ENCODE measurements at regions of chr6 and their contacts with region 1.

Region 1: GRCh38 chr6:145633981-145634627 is 101.2 kb downstream of the EPM2A start:
- DNase-seq: peak; percentile 76
- ATAC-seq: peak; percentile 99
- H3K4me3 ChIP-seq: no peak overlapping the region
- H3K27ac ChIP-seq: no peak overlapping the region
- H3K4me1 ChIP-seq: no peaks in the 10 kb centered on the region
- H3K27me3 ChIP-seq: no peaks in the 10 kb centered on the region
- CTCF ChIP-seq: peak; percentile 80
- POLR2A ChIP-seq: no peak
- RAD21 ChIP-seq: peak; percentile 85

Region 2: GRCh38 chr6:144840619-144841018 is 793.5 kb before region 1 on chr6:
- CTCF ChIA-PET with region 1: no interaction called
- POLR2A ChIA-PET with region 1: no interaction called
- dilution Hi-C with region 1: no loop called
- in situ Hi-C with region 1: no loop called
- intact Hi-C with region 1: loop called (anchors 5 kb)
- DNase-seq: no peak
- ATAC-seq: no peak
- H3K4me3 ChIP-seq: no peak overlapping the region
- H3K27ac ChIP-seq: no peak overlapping the region
- H3K4me1 ChIP-seq: peaks cover 2% of the 10 kb centered on the region; the same call in 1 of the 2 replicates
- H3K27me3 ChIP-seq: no peaks in the 10 kb centered on the region
- CTCF ChIP-seq: no peak
- POLR2A ChIP-seq: no peak
- RAD21 ChIP-seq: no peak

Region 3: GRCh38 chr6:144931172-144932035 is 702.7 kb before region 1 on chr6:
- CTCF ChIA-PET with region 1: interaction called, 3 read pairs
- POLR2A ChIA-PET with region 1: no interaction called
- dilution Hi-C with region 1: no loop called
- in situ Hi-C with region 1: no loop called
- intact Hi-C with region 1: loop called (anchors 10 kb)
- DNase-seq: peak; percentile 36
- ATAC-seq: peak; percentile 76
- H3K4me3 ChIP-seq: no peak overlapping the region
- H3K27ac ChIP-seq: no peak overlapping the region
- H3K4me1 ChIP-seq: no peaks in the 10 kb centered on the region
- H3K27me3 ChIP-seq: no peaks in the 10 kb centered on the region
- CTCF ChIP-seq: peak; percentile 66
- POLR2A ChIP-seq: no peak
- RAD21 ChIP-seq: peak; percentile 70

Region 4: DNA sequence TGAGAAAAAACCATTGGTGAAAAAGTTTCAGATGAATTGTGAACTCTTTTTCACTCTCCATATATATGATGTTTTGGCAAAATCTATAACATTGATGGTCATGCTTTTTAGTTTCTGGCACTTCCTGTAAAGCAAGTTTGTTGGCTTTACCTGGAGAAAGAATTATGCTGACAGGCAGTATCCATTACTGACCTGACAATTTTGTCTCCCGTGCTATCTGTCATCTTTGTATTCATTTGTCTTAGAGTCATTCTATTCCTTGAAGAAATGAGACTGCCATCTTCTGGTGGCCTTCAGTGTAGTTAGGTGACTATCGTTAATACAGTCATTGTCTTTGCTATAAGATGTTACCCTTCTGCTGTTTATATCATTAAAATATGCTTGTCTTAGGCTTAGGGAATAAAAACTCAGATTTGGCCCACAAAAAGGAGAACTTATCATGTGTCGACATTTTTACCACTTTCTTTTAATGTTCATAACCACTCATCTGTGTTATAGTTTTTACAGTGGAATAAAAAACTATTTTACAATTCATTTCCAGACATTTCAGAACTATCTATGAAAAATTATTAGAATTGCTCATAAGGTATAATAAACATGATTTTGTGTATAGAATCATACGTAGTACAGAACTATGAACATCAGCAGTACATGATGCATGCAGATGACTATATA is 605.8 kb before region 1 on chr6:
- CTCF ChIA-PET with region 1: interaction called, 3 read pairs
- POLR2A ChIA-PET with region 1: no interaction called
- dilution Hi-C with region 1: no loop called
- in situ Hi-C with region 1: no loop called
- intact Hi-C with region 1: loop called (anchors 5 kb)
- DNase-seq: peak; percentile 33
- ATAC-seq: peak; percentile 80; the same call in 1 of the 2 replicates
- H3K4me3 ChIP-seq: no peak overlapping the region
- H3K27ac ChIP-seq: no peak overlapping the region
- H3K4me1 ChIP-seq: no peaks in the 10 kb centered on the region
- H3K27me3 ChIP-seq: no peaks in the 10 kb centered on the region
- CTCF ChIP-seq: peak; percentile 52
- POLR2A ChIP-seq: no peak
- RAD21 ChIP-seq: peak; percentile 54

Region 5: GRCh38 chr6:145137426-145137825 is 496.7 kb before region 1 on chr6:
- CTCF ChIA-PET with region 1: no interaction called
- POLR2A ChIA-PET with region 1: no interaction called
- dilution Hi-C with region 1: no loop called
- in situ Hi-C with region 1: no loop called
- intact Hi-C with region 1: loop called (anchors 5 kb)
- DNase-seq: peak; percentile 38
- ATAC-seq: peak; percentile 35; the same call in 1 of the 2 replicates
- H3K4me3 ChIP-seq: no peak overlapping the region
- H3K27ac ChIP-seq: no peak overlapping the region
- H3K4me1 ChIP-seq: 0 out of 2 replicates have a peak, but pooled peaks cover 1% of the 10 kb centered on the region
- H3K27me3 ChIP-seq: no peaks in the 10 kb centered on the region
- CTCF ChIP-seq: peak; percentile 43
- POLR2A ChIP-seq: no peak
- RAD21 ChIP-seq: peak; percentile 53

Region 6: GRCh38 chr6:145491127-145491526 is 143.0 kb before region 1 on chr6:
- CTCF ChIA-PET with region 1: no interaction called
- POLR2A ChIA-PET with region 1: no interaction called
- dilution Hi-C with region 1: no loop called
- in situ Hi-C with region 1: no loop called
- intact Hi-C with region 1: no loop called
- DNase-seq: no peak
- ATAC-seq: no peak
- H3K4me3 ChIP-seq: no peak overlapping the region
- H3K27ac ChIP-seq: no peak overlapping the region
- H3K4me1 ChIP-seq: no peaks in the 10 kb centered on the region
- H3K27me3 ChIP-seq: no peaks in the 10 kb centered on the region; the same call in 1 of the 2 replicates
- CTCF ChIP-seq: no peak
- POLR2A ChIP-seq: no peak
- RAD21 ChIP-seq: no peak

Region 7: DNA sequence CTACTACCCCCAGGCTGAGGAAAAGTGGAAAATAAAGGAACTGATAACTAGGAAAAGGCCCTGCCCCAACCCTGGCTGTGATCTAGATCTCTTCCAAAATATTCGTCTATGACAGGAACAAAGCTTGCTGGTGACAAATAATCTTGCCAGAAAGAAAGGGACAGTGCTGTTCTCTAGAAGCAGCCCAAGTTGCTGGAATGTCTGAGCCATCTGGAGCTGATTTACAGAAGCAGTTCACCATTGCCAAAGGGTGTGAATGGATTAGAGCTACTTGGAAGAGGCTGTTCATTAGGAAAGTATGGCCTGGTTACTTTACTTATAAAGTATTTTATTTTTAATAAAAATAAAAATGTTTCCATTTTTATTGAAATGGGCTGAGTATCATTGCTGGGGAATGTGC is 45.1 kb before region 1 on chr6:
- CTCF ChIA-PET with region 1: no interaction called
- POLR2A ChIA-PET with region 1: no interaction called
- dilution Hi-C with region 1: no loop called
- in situ Hi-C with region 1: no loop called
- intact Hi-C with region 1: no loop called
- DNase-seq: no peak
- ATAC-seq: no peak
- H3K4me3 ChIP-seq: no peak overlapping the region
- H3K27ac ChIP-seq: no peak overlapping the region
- H3K4me1 ChIP-seq: no peaks in the 10 kb centered on the region
- H3K27me3 ChIP-seq: no peaks in the 10 kb centered on the region
- CTCF ChIP-seq: no peak
- POLR2A ChIP-seq: no peak
- RAD21 ChIP-seq: no peak

Region 8: DNA sequence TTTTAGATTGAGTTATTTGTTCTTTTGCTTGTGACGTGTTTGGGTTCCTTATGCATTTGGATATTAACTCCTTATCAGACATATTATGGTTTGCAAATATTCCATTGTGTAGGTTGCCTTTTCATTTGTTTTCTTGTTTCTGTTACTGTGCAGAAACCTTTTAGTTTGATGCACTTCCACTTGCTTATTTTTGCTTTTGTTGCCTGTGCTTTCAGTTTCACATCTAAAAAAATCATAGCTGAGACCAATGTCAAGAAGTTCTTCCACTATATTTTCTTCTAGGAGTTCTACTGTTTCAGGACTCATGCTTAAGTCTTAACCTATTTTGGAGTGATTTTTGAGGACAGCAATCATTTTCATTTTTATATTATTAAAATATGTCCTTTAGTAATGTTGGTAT is 12.3 kb before region 1 on chr6:
- CTCF ChIA-PET with region 1: interaction called, 14 read pairs
- POLR2A ChIA-PET with region 1: no interaction called
- dilution Hi-C with region 1: no loop called
- in situ Hi-C with region 1: no loop called
- intact Hi-C with region 1: no loop called
- DNase-seq: no peak
- ATAC-seq: no peak
- H3K4me3 ChIP-seq: no peak overlapping the region
- H3K27ac ChIP-seq: no peak overlapping the region
- H3K4me1 ChIP-seq: no peaks in the 10 kb centered on the region; the same call in 1 of the 2 replicates
- H3K27me3 ChIP-seq: no peaks in the 10 kb centered on the region
- CTCF ChIP-seq: no peak
- POLR2A ChIP-seq: no peak
- RAD21 ChIP-seq: no peak

Region 9: GRCh38 chr6:145887969-145888368 is 253.9 kb after region 1 on chr6:
- CTCF ChIA-PET with region 1: no interaction called
- POLR2A ChIA-PET with region 1: no interaction called
- dilution Hi-C with region 1: no loop called
- in situ Hi-C with region 1: no loop called
- intact Hi-C with region 1: loop called (anchors 5 kb)
- DNase-seq: peak; percentile 42
- ATAC-seq: no peak
- H3K4me3 ChIP-seq: no peak overlapping the region
- H3K27ac ChIP-seq: no peak overlapping the region
- H3K4me1 ChIP-seq: peaks cover 8% of the 10 kb centered on the region
- H3K27me3 ChIP-seq: no peaks in the 10 kb centered on the region
- CTCF ChIP-seq: peak; percentile 67
- POLR2A ChIP-seq: no peak
- RAD21 ChIP-seq: peak; percentile 67